ENCODE measurements at regions of chr10 and their contacts with region 1.

Region 1: GRCh38 chr10:98262571-98262970 is 5.4 kb downstream of the LOXL4 start:
- DNase-seq: peak; percentile 77 to 93
- ATAC-seq: peak; percentile 83 to 86 (median 85)
- H3K4me3 ChIP-seq: no peak overlapping the region
- H3K27ac ChIP-seq: no peak overlapping the region
- H3K4me1 ChIP-seq: peaks cover 23% of the 10 kb centered on the region
- H3K27me3 ChIP-seq: no peaks in the 10 kb centered on the region
- CTCF ChIP-seq: peak; percentile 68

Region 2: GRCh38 chr10:98309366-98310355 is 47.1 kb after region 1 on chr10:
- intact Hi-C with region 1: loop called (anchors 1 to 5 kb)
- DNase-seq: peak; percentile 76 to 88
- ATAC-seq: peak; percentile 83 to 91 (median 90)
- H3K4me3 ChIP-seq: no peak overlapping the region
- H3K27ac ChIP-seq: no peak overlapping the region
- H3K4me1 ChIP-seq: peaks cover 10% of the 10 kb centered on the region
- H3K27me3 ChIP-seq: peaks cover 0 to 3% (median 0%) of the 10 kb centered on the region in 3 donors
- CTCF ChIP-seq: peak; percentile 86

Region 3: DNA sequence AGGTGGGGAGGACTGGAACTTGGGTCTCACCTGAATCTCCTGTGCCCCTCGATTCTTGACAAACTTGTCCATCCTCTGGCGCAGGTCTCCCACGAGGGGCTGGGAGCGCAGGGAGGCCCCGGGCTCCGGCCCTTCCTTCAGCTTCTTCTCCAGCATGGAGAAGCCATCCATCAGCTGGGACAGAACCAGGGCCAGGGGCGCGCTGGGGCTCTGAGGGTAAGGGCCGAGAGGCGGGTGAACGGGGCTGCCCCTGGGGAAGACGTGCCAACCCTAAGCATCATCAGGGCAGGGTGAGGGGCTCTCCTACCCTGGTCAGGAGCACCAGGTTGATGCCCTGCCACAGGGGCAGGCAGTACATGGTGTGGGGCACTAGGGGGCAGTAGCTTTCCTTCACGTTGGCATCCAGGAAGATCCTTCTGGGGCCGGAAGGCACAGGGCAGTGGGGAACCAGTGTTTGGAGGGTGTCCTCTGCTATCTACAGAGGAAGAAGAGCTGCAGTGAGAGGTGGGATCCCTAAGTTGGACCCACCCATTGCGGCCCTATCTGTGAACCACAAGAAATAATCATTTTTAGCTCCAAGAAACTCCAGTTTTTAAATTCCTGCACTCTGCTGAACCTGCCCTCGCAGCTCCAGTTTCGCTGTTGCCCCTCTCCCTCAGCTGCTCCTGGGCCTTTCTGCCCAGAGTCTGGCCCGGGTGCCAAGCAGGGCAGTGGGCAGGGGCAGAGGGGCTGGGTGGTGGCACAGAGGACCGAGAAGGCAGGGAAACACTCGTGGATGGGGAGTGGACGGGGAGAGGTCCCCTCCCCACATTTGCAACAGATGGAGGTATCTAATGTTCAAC is 163.2 kb after region 1 on chr10:
- intact Hi-C with region 1: loop called in 1 of 2 experiments (anchors 10 kb)
- DNase-seq: no peak
- ATAC-seq: peak; percentile 54 to 78 (median 66)
- H3K4me3 ChIP-seq: no peak overlapping the region
- H3K27ac ChIP-seq: no peak overlapping the region
- H3K4me1 ChIP-seq: no peaks in the 10 kb centered on the region
- H3K27me3 ChIP-seq: no peaks in the 10 kb centered on the region
- CTCF ChIP-seq: peak; percentile 61

Region 4: DNA sequence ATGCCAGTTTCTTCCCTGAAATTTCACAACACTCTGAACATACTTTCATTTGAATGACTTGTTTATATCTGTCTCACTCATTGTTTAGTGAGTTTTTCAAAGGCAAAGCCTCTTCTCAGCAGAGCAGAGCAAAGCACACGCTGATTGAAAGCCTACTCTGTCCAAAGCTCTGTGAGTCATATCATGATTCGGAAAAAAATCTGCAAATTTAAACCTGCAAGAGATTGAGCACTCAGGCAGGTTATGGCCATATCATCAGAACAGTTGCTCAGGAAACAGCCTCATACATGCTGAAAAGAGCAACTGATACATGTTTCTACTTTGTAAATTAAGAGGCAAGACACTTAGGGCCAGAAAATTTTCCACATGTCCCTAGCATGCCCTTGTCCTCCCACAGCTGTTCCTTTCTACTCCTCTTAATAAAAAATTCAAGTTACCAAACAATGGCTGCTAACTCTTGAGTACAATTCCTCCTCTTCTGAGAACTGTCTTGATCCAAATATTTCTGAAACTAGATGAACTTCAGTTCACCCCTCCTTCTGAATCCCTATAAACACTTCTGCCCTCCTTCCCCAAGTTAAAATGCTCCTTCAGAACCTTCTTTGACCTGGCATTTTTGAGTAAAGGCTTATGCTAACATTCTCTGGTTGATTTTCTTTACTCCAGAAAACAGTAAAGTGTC is 324.7 kb after region 1 on chr10:
- intact Hi-C with region 1: no loop called
- DNase-seq: no peak
- ATAC-seq: no peak
- H3K4me3 ChIP-seq: no peak overlapping the region
- H3K27ac ChIP-seq: peak overlapping the region; percentile 10
- H3K4me1 ChIP-seq: no peaks in the 10 kb centered on the region
- H3K27me3 ChIP-seq: no peaks in the 10 kb centered on the region
- CTCF ChIP-seq: no peak

Region 5: GRCh38 chr10:98664331-98665042 is 401.9 kb after region 1 on chr10:
- intact Hi-C with region 1: loop called in 1 of 2 experiments (anchors 10 kb)
- DNase-seq: no peak
- ATAC-seq: peak in 3 of 4 donors; percentile 59 to 81 (median 70)
- H3K4me3 ChIP-seq: no peak overlapping the region
- H3K27ac ChIP-seq: no peak overlapping the region
- H3K4me1 ChIP-seq: no peaks in the 10 kb centered on the region
- H3K27me3 ChIP-seq: peaks cover 0 to 6% (median 0%) of the 10 kb centered on the region in 3 donors
- CTCF ChIP-seq: peak; percentile 66